AG04450 (cell line): ENCODE measurements at regions of chr2 and their contacts with region 1.

Region 1: DNA sequence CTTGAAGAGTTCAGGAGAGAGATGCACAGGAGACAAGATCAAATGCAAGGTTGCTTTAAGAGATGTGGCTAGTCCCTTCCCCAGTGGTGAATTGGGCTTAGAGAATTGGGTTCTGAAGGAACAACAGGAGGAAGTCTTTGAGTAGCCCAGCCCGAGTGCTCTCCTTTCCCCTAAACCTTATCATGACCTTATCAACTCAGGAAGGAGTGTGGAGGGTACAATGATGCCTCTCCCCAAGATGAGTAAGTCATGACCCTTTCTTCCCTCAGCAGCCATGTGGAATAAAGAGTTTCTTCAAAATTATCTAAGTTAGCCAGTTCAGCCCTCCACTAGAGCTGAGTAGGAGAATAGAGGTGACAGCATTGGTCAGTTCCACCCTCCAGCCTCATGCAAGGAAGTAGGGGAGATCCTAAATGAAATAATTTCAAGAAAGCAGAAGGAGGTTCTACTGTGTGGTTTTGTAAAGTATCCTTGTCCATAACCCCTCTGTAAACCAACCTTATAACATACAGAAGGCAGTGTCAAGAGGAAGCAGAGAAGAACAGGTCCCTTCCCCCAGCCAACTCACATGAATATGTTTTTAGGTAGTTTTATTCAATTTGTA is 88.4 kb downstream of the ARHGAP15 start:
- DNase-seq: no peak
- H3K4me3 ChIP-seq: no peak overlapping the region
- H3K27ac ChIP-seq: no peak overlapping the region
- H3K27me3 ChIP-seq: no peaks in the 10 kb centered on the region
- CTCF ChIP-seq: no peak

Region 2: DNA sequence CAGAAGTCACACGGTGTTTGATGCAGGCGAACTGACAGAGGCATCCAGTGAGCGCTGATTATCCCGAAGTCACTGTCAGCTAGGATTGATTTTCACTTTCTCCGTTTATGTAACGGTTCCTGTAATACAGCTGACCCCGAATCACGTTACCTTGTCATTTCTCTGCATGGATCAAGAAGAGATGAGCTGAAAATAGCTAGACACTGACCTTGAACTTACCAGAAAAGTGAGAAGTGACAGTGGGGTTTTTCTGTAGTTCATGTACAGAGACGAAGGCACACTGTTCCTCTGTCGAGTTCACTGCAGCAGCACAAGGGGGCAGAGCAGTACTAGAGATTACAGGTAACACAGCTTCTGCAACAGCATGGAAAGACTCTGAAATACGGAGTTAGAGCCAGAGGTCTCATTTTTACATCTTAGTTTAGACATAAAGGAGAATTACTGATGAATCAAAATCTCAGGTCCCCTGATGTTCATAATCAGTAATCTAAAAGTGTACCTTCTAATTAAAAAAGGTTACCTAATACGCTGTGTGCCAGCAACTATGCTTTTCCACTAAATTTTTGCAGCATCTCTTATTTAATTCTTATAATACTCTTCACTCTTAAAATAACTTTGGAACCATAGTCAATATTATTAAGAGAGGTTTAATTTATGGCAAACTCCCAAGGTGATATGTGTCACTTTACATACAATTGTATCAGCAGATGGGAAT is 55.3 kb before region 1 on chr2:
- CTCF ChIA-PET with region 1: interaction called, 17 read pairs
- POLR2A ChIA-PET with region 1: no interaction called
- DNase-seq: peak; percentile 15
- H3K4me3 ChIP-seq: peak overlapping the region; percentile 39
- H3K27ac ChIP-seq: no peak overlapping the region
- H3K27me3 ChIP-seq: peaks cover 10% of the 10 kb centered on the region
- CTCF ChIP-seq: peak; percentile 79

Region 3: DNA sequence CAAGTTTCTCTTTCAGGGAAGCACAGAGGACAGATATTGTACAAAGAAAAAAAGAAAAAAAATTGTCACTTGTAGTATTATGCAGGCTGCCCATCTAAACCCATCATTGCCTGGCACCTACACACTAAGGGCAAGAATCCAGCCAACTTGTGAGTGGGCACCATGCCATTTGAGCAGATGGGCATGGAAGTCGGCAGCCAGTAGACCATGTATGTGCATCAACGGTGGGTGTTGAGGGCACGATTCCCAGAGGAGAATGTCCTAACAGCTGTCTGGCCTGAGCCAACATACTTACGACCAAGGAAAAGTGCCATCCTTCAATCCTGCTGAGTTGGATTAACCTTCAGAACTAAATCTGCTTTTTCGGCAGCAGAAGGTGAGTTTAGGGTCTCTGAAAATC is 24.5 kb before region 1 on chr2:
- CTCF ChIA-PET with region 1: interaction called, 10 read pairs
- POLR2A ChIA-PET with region 1: no interaction called
- DNase-seq: no peak
- H3K4me3 ChIP-seq: no peak overlapping the region
- H3K27ac ChIP-seq: no peak overlapping the region
- H3K27me3 ChIP-seq: no peaks in the 10 kb centered on the region
- CTCF ChIP-seq: no peak